ENCODE measurements at regions of chr3 and their contacts with region 1.

Region 1: DNA sequence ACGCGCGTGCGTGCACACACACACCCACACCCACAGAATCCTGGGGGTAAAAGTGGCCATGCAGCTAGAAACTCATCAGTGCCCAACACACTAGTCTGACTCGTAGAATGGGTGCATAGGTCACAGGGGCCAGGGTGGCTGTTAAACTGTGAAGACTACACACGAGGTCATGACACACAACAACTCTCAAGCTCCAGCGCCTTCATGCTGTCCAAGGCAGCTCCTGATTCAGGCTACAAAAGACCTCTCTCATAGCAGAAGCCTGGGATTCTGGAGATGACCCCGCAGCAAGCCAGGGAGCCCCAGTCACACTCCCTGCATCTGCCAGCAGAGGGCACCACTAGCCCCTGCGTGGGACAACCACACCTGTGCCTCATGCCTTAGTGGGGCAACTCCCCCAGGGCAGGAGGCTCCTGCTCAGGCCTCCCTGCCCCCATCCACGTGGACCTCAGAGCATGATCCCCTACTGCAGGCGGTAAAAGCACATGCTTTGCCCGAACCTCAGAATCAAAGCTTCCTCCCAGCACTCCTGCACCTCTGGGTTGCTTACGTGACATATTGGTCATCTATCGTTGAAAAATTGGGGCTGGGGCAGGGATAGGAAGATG is 93.1 kb downstream of the LRIG1 start:
- DNase-seq: peak; percentile 69
- H3K4me3 Mint-ChIP-seq: no peak overlapping the region
- H3K27ac Mint-ChIP-seq: no peak overlapping the region
- H3K4me1 Mint-ChIP-seq: no peaks in the 10 kb centered on the region
- H3K27me3 Mint-ChIP-seq: no peaks in the 10 kb centered on the region
- CTCF ChIP-seq: peak; percentile 94

Region 2: DNA sequence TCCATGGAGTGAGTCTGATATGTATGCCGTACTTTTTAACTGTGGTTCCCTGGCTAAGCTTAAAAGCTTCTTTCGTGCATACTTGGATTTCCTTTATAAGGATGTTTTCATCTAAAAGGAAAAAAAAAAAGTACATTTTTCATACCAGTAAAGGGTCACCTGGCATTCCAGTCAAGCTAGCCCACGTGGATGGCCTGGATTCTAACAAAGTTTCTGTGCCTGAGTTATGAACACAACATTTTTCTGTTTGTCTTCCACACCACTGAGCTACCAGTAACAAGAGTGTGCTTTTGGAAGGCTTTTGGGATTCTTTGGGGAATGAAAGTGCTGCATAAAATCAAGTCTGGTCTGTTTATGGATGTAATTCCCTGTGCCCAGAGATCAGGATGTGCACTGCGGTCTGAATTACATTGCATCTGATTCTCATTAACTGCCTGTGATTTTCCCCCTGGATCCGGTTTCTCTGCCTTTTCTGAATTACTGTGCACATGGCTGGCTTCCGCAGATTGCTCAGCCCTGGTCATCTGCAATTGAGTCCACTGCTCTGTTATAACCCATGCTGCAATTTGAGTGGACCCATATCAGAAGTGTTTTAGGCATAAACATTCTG is 330.7 kb before region 1 on chr3:
- CTCF ChIA-PET with region 1: no interaction called
- POLR2A ChIA-PET with region 1: no interaction called
- intact Hi-C with region 1: no loop called
- DNase-seq: no peak
- H3K4me3 Mint-ChIP-seq: no peak overlapping the region
- H3K27ac Mint-ChIP-seq: no peak overlapping the region
- H3K4me1 Mint-ChIP-seq: no peaks in the 10 kb centered on the region
- H3K27me3 Mint-ChIP-seq: no peaks in the 10 kb centered on the region
- CTCF ChIP-seq: no peak

Region 3: GRCh38 chr3:66276705-66277274 is 130.9 kb before region 1 on chr3:
- CTCF ChIA-PET with region 1: interaction called, 5 read pairs
- POLR2A ChIA-PET with region 1: no interaction called
- intact Hi-C with region 1: loop called (anchors 10 kb)
- DNase-seq: peak; percentile 68
- H3K4me3 Mint-ChIP-seq: no peak overlapping the region
- H3K27ac Mint-ChIP-seq: no peak overlapping the region
- H3K4me1 Mint-ChIP-seq: no peaks in the 10 kb centered on the region
- H3K27me3 Mint-ChIP-seq: no peaks in the 10 kb centered on the region
- CTCF ChIP-seq: peak; percentile 56

Region 4: DNA sequence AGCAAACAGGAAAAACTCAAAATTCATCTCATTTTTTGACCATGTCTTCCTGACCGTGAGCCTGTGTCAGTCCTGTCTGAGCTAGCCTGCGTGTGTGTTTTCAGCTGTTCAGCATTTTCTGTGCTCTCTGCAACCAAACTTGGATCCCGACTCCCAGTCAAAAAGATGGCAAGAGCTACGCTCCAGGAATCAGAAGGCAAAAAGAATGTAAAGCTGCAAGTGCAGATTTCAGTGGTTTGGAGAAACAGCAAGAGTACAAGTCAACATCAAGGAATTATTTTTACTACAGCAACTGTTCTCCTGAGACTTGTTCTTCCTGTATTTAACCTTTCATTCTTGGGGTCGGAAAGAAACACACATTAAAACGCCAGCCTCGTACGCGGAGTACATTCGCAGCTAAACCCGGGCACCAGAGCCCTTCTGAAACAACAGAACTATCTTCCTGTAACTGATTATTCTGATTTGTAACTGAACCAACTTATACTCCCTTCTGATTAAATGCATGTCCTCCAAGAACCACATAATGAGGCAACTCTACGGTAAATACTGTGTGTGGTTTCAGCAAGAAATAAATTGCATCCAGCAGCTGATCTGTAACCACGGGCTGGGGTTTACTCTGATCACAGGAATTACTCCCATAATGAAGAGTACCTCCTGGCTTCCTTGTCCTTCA is 14.2 kb before region 1 on chr3:
- CTCF ChIA-PET with region 1: interaction called, 37 read pairs
- POLR2A ChIA-PET with region 1: no interaction called
- intact Hi-C with region 1: no loop called
- DNase-seq: no peak
- H3K4me3 Mint-ChIP-seq: no peak overlapping the region
- H3K27ac Mint-ChIP-seq: no peak overlapping the region
- H3K4me1 Mint-ChIP-seq: peaks cover 4% of the 10 kb centered on the region
- H3K27me3 Mint-ChIP-seq: no peaks in the 10 kb centered on the region
- CTCF ChIP-seq: no peak

Region 5: GRCh38 chr3:66450390-66451022 is 42.8 kb after region 1 on chr3:
- CTCF ChIA-PET with region 1: interaction called, 11 read pairs
- POLR2A ChIA-PET with region 1: no interaction called
- intact Hi-C with region 1: no loop called
- DNase-seq: peak; percentile 69
- H3K4me3 Mint-ChIP-seq: peak overlapping the region; percentile 62
- H3K27ac Mint-ChIP-seq: peak overlapping the region; percentile 61
- H3K4me1 Mint-ChIP-seq: peaks cover 19% of the 10 kb centered on the region
- H3K27me3 Mint-ChIP-seq: no peaks in the 10 kb centered on the region
- CTCF ChIP-seq: no peak

Region 6: GRCh38 chr3:66748175-66748876 is 340.6 kb after region 1 on chr3:
- CTCF ChIA-PET with region 1: interaction called, 11 read pairs
- POLR2A ChIA-PET with region 1: interaction called, 3 read pairs
- intact Hi-C with region 1: no loop called
- DNase-seq: no peak
- H3K4me3 Mint-ChIP-seq: no peak overlapping the region
- H3K27ac Mint-ChIP-seq: no peak overlapping the region
- H3K4me1 Mint-ChIP-seq: no peaks in the 10 kb centered on the region
- H3K27me3 Mint-ChIP-seq: no peaks in the 10 kb centered on the region
- CTCF ChIP-seq: no peak

Region 7: GRCh38 chr3:66822186-66823008 is 414.7 kb after region 1 on chr3:
- CTCF ChIA-PET with region 1: interaction called, 604 read pairs
- POLR2A ChIA-PET with region 1: interaction called, 3 read pairs
- intact Hi-C with region 1: no loop called
- DNase-seq: peak; percentile 81
- H3K4me3 Mint-ChIP-seq: no peak overlapping the region
- H3K27ac Mint-ChIP-seq: no peak overlapping the region
- H3K4me1 Mint-ChIP-seq: no peaks in the 10 kb centered on the region
- H3K27me3 Mint-ChIP-seq: peaks cover 11% of the 10 kb centered on the region
- CTCF ChIP-seq: peak; percentile 66

Region 8: DNA sequence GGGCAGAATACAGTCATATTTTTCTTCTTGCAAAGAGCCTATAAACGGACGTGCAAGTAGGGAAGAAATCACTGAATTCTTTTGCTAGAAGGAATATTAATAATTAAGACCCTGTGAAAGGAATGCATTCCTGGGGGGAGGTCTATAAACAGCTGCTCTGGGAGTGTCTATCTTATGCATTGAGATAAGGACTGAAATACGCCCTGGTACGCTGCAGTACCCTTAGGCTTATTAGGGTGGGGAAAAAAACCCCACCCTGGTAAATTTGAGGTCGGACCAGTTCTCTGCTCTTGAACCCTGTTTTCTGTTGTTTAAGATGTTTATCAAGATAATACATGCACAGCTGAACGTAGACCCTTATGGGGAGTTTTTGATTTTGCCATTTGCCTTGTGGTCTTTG is 490.4 kb after region 1 on chr3:
- CTCF ChIA-PET with region 1: no interaction called
- POLR2A ChIA-PET with region 1: no interaction called
- intact Hi-C with region 1: no loop called
- DNase-seq: no peak
- H3K4me3 Mint-ChIP-seq: no peak overlapping the region
- H3K27ac Mint-ChIP-seq: no peak overlapping the region
- H3K4me1 Mint-ChIP-seq: no peaks in the 10 kb centered on the region
- H3K27me3 Mint-ChIP-seq: peaks cover 29% of the 10 kb centered on the region
- CTCF ChIP-seq: no peak